ENCODE measurements at regions of chr6 and their contacts with region 1.

Region 1: GRCh38 chr6:110039364-110039980 is 61.4 kb downstream of the GPR6 start:
- DNase-seq: peak; percentile 92
- ATAC-seq: peak; percentile 87
- H3K4me3 Mint-ChIP-seq: peak overlapping the region; percentile 79
- H3K27ac Mint-ChIP-seq: peak overlapping the region; percentile 98
- H3K4me1 Mint-ChIP-seq: peaks cover 13% of the 10 kb centered on the region
- H3K27me3 Mint-ChIP-seq: no peaks in the 10 kb centered on the region

Region 2: GRCh38 chr6:109526905-109527628 is 512.4 kb before region 1 on chr6:
- CTCF ChIA-PET with region 1: interaction called, 19 read pairs
- POLR2A ChIA-PET with region 1: no interaction called
- intact Hi-C with region 1: loop called (anchors 1 kb)
- DNase-seq: peak; percentile 66
- ATAC-seq: peak; percentile 84
- H3K4me3 Mint-ChIP-seq: no peak overlapping the region
- H3K27ac Mint-ChIP-seq: no peak overlapping the region
- H3K4me1 Mint-ChIP-seq: no peaks in the 10 kb centered on the region
- H3K27me3 Mint-ChIP-seq: no peaks in the 10 kb centered on the region

Region 3: GRCh38 chr6:109696355-109696754 is 343.1 kb before region 1 on chr6:
- CTCF ChIA-PET with region 1: interaction called, 135 read pairs
- POLR2A ChIA-PET with region 1: no interaction called
- intact Hi-C with region 1: loop called in 1 of 2 experiments (anchors 1 kb)
- DNase-seq: no peak
- ATAC-seq: no peak
- H3K4me3 Mint-ChIP-seq: no peak overlapping the region
- H3K27ac Mint-ChIP-seq: no peak overlapping the region
- H3K4me1 Mint-ChIP-seq: peaks cover 14% of the 10 kb centered on the region
- H3K27me3 Mint-ChIP-seq: no peaks in the 10 kb centered on the region

Region 4: DNA sequence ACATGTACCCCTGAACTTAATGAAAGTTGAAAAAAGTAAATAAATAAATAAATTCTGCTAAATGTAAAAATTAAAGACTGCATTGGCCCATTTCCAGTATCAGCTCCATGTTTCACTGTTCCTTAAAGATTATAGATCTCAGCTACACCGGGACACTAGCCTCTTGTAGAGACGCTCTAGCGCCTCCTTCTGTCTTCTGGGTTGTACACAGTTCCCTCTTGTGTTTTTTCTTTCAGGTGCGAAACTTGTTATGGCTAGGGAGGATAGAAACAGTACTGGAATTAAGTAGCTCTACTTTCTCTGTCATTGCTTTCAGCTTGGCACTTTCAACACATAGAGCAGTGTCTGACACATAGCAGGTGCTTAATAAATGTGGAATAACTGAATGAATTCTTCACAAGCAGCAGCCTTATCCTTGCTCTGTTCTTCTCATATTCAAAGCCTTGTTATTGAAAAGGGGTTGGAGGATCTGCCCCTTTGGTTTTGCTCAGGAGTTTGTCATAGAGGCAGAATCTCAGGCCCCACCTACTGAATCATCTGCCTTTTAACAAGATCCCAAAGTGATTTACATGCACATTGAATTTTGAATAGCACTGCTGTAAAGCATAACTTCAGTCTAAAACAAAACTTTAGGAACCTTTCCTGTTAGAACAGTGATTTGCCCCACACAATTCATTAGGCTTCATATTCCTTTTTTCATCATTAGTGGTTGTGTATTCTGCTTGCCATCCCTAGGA is 256.1 kb before region 1 on chr6:
- CTCF ChIA-PET with region 1: interaction called, 14 read pairs
- POLR2A ChIA-PET with region 1: no interaction called
- intact Hi-C with region 1: no loop called
- DNase-seq: peak; percentile 19
- ATAC-seq: peak; percentile 33
- H3K4me3 Mint-ChIP-seq: no peak overlapping the region
- H3K27ac Mint-ChIP-seq: no peak overlapping the region
- H3K4me1 Mint-ChIP-seq: no peaks in the 10 kb centered on the region
- H3K27me3 Mint-ChIP-seq: no peaks in the 10 kb centered on the region

Region 5: DNA sequence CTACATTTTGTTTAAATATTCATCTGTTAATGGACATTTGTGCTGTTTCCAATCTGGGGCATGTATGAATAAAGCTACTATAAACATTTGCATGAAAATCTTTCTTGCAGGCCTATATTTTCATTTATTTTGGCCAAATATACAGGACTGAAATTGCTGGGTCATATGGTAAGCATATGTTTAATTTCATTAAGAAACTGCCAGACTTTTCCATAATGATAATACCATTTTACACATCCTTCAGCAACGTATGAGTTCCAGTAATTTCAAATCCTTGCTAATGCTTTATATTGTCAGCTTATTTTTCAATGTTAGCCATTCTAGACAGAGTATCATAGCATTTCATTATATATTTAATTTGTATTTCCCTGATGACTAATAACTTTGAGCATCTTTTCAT is 10.3 kb before region 1 on chr6:
- CTCF ChIA-PET with region 1: interaction called, 40 read pairs
- POLR2A ChIA-PET with region 1: no interaction called
- intact Hi-C with region 1: no loop called
- DNase-seq: no peak
- ATAC-seq: no peak
- H3K4me3 Mint-ChIP-seq: no peak overlapping the region
- H3K27ac Mint-ChIP-seq: no peak overlapping the region
- H3K4me1 Mint-ChIP-seq: no peaks in the 10 kb centered on the region
- H3K27me3 Mint-ChIP-seq: no peaks in the 10 kb centered on the region

Region 6: DNA sequence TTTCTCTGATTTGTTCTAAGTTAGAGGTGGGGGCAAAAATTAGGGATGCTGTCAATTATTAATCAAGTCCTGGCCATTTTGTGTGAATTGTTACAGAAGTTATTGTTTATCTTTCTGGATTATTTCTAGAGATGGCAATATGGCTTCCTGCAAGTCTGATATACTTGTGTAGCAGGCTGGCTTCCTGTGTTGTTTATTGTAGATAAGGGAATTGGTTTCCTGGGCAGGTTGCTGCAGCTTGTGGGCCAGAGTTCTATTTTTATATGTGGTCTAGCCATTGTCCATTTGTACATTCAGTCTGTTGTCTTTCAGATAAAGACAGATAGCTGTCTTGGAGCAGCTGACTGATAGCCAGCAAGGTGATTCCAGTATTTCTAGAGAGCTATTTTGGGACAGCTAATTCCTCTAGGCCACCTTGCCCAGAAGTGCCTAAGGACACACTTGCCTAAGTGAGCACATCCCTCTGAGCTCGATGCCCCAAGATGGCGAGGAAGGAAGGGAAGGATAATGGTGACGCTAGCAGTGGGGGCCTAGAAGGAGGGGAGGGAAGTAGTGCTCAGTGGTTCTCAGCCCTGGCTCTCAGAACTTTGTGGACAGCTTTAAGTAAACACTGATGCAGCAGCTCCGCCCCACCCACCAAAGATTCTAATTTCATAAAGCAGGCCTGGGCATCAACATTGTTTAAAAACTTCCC is 350.4 kb after region 1 on chr6:
- CTCF ChIA-PET with region 1: interaction called, 51 read pairs
- POLR2A ChIA-PET with region 1: no interaction called
- intact Hi-C with region 1: loop called (anchors 1 kb)
- DNase-seq: no peak
- ATAC-seq: no peak
- H3K4me3 Mint-ChIP-seq: no peak overlapping the region
- H3K27ac Mint-ChIP-seq: no peak overlapping the region
- H3K4me1 Mint-ChIP-seq: peaks cover 19% of the 10 kb centered on the region
- H3K27me3 Mint-ChIP-seq: no peaks in the 10 kb centered on the region

Measured in activated CD4-positive, alpha-beta T cell treated with anti-CD3 and anti-CD28 coated beads for 36 hours (primary cell).